ENCODE measurements at regions of chr19 and their contacts with region 1.

Region 1: GRCh38 chr19:4791170-4792018 is at the start of gene FEM1A:
- DNase-seq: peak; percentile 100
- ATAC-seq: peak; percentile 94
- H3K4me3 ChIP-seq: peak within 1 kb of the TSS; percentile 48 to 79 (median 76)
- H3K4me3 Mint-ChIP-seq: peak within 1 kb of the TSS; percentile 84
- H3K27ac ChIP-seq: peak within 1 kb of the TSS; percentile 67 to 93
- H3K27ac Mint-ChIP-seq: peak within 1 kb of the TSS; percentile 89
- H3K4me1 ChIP-seq: peaks cover 8 to 22% of the 10 kb centered on the region in 2 donors
- H3K4me1 Mint-ChIP-seq: peaks cover 30% of the 10 kb centered on the region
- H3K27me3 ChIP-seq: no peaks in the 10 kb centered on the region
- H3K27me3 Mint-ChIP-seq: no peaks in the 10 kb centered on the region
- CTCF ChIP-seq: peak; percentile 98
- total RNA-seq, gene FEM1A: 18.2 and 18.7 TPM in 2 replicates

Region 2: GRCh38 chr19:4246767-4247593 is 544.4 kb before region 1 on chr19 and contains the start of gene YJU2:
- CTCF ChIA-PET with region 1: no interaction called
- POLR2A ChIA-PET with region 1: no interaction called
- intact Hi-C with region 1: loop called (anchors 2 kb)
- DNase-seq: peak; percentile 99
- ATAC-seq: peak; percentile 94
- H3K4me3 ChIP-seq: peak within 1 kb of the TSS; percentile 86 to 99 (median 98)
- H3K4me3 Mint-ChIP-seq: peak within 1 kb of the TSS; percentile 91
- H3K27ac ChIP-seq: peak within 1 kb of the TSS; percentile 99 to 100
- H3K27ac Mint-ChIP-seq: peak within 1 kb of the TSS; percentile 95
- H3K4me1 ChIP-seq: peaks cover 12 to 24% of the 10 kb centered on the region in 2 donors
- H3K4me1 Mint-ChIP-seq: peaks cover 23% of the 10 kb centered on the region
- H3K27me3 ChIP-seq: no peaks in the 10 kb centered on the region
- H3K27me3 Mint-ChIP-seq: no peaks in the 10 kb centered on the region
- CTCF ChIP-seq: peak; percentile 40
- total RNA-seq, gene YJU2: 39.8 and 40.3 TPM in 2 replicates

Region 3: GRCh38 chr19:4583961-4584669 is 207.3 kb before region 1 on chr19:
- CTCF ChIA-PET with region 1: no interaction called
- POLR2A ChIA-PET with region 1: no interaction called
- intact Hi-C with region 1: no loop called
- DNase-seq: no peak
- ATAC-seq: no peak
- H3K4me3 ChIP-seq: no peak overlapping the region
- H3K4me3 Mint-ChIP-seq: no peak overlapping the region
- H3K27ac ChIP-seq: no peak overlapping the region
- H3K27ac Mint-ChIP-seq: no peak overlapping the region
- H3K4me1 ChIP-seq: peaks cover 15 to 18% of the 10 kb centered on the region in 2 donors
- H3K4me1 Mint-ChIP-seq: peaks cover 14% of the 10 kb centered on the region
- H3K27me3 ChIP-seq: peaks cover 0 to 67% (median 43%) of the 10 kb centered on the region in 4 experiments
- H3K27me3 Mint-ChIP-seq: peaks cover 40% of the 10 kb centered on the region
- CTCF ChIP-seq: no peak

Region 4: GRCh38 chr19:4669723-4670480 is 121.5 kb before region 1 on chr19 and contains the start of gene MYDGF:
- CTCF ChIA-PET with region 1: interaction called, 4 read pairs
- POLR2A ChIA-PET with region 1: interaction called, 6 read pairs
- intact Hi-C with region 1: loop called (anchors 1 kb)
- DNase-seq: peak; percentile 93
- ATAC-seq: peak; percentile 98
- H3K4me3 ChIP-seq: peak within 1 kb of the TSS; percentile 33 to 84 (median 79)
- H3K4me3 Mint-ChIP-seq: peak within 1 kb of the TSS; percentile 88
- H3K27ac ChIP-seq: peak within 1 kb of the TSS; percentile 6 to 87
- H3K27ac Mint-ChIP-seq: peak within 1 kb of the TSS; percentile 78
- H3K4me1 ChIP-seq: peaks cover 10 to 18% of the 10 kb centered on the region in 2 donors
- H3K4me1 Mint-ChIP-seq: peaks cover 20% of the 10 kb centered on the region
- H3K27me3 ChIP-seq: no peaks in the 10 kb centered on the region
- H3K27me3 Mint-ChIP-seq: no peaks in the 10 kb centered on the region
- CTCF ChIP-seq: no peak
- total RNA-seq, gene MYDGF: 18.1 and 21.2 TPM in 2 replicates

Region 5: DNA sequence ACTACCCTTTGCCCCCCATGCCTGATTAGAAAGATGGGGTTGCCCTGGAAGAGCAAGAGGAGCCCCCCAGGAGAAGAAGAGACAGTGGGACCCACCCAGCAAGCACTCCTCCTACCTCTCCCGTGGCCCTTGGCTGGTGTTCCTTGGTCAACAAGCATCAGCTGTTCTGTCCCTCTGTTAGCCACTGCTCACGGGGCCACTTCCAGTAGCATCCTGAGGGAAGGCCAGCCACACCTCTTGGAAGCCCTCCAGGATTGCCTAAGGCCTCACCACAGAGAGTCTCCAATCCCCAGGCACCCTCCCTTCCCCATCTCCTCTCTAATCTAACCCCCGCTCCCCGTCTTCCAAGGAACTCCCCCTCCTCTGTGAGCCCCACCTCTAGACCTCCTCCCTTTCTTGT is 52.7 kb before region 1 on chr19:
- CTCF ChIA-PET with region 1: interaction called, 102 read pairs
- POLR2A ChIA-PET with region 1: no interaction called
- intact Hi-C with region 1: no loop called
- DNase-seq: no peak
- ATAC-seq: no peak
- H3K4me3 ChIP-seq: no peak overlapping the region
- H3K4me3 Mint-ChIP-seq: no peak overlapping the region
- H3K27ac ChIP-seq: no peak overlapping the region
- H3K27ac Mint-ChIP-seq: no peak overlapping the region
- H3K4me1 ChIP-seq: no peaks in the 10 kb centered on the region
- H3K4me1 Mint-ChIP-seq: no peaks in the 10 kb centered on the region
- H3K27me3 ChIP-seq: peaks cover 0 to 19% (median 6%) of the 10 kb centered on the region in 4 experiments
- H3K27me3 Mint-ChIP-seq: peaks cover 16% of the 10 kb centered on the region
- CTCF ChIP-seq: no peak

Region 6: DNA sequence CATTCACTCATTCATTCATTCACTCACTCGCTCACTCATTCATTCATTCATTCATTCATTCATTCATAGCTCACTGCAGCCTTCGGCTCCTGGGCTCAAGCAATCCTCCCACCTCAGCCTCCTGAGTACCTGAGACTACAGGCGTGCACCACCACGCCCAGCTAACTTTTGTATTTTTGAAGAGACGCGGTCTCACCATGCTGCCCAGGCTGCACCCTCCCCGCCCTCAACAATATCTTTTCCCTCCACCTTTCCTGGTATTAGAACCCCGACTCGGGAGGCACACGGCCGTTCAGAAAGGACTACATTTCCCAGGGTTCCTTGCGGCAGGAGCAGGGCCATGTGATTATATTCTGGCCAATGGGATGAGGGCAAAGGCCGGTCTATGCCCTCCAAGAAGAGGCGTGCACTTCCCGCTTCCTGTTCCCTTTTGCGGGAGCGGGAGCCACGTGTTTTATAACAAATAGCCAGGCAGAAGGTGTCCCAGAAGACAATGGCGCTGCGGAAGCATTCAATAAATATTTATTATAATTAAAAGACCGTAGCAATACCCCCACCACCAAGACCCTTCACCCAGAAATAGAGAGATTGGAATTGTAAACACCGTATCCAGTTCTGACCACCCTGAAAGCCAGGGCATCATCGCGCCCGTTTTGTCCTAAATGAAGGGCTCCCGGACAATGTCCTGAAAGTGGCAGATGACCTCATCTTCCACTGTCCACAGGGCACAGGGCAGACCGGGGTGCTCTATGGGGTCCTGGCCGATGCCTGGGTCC is 24.2 kb after region 1 on chr19:
- CTCF ChIA-PET with region 1: interaction called, 6 read pairs
- POLR2A ChIA-PET with region 1: interaction called, 6 read pairs
- intact Hi-C with region 1: loop called (anchors 1 kb)
- DNase-seq: peak; percentile 85
- ATAC-seq: peak; percentile 77
- H3K4me3 ChIP-seq: peak overlapping the region in 4 of 5 experiments; percentile 19 to 57 (median 37)
- H3K4me3 Mint-ChIP-seq: peak overlapping the region; percentile 74
- H3K27ac ChIP-seq: peak overlapping the region; percentile 3 to 12
- H3K27ac Mint-ChIP-seq: peak overlapping the region; percentile 60
- H3K4me1 ChIP-seq: peaks cover 10 to 20% of the 10 kb centered on the region in 2 donors
- H3K4me1 Mint-ChIP-seq: peaks cover 25% of the 10 kb centered on the region
- H3K27me3 ChIP-seq: no peaks in the 10 kb centered on the region
- H3K27me3 Mint-ChIP-seq: no peaks in the 10 kb centered on the region
- CTCF ChIP-seq: no peak

Measured in B cell (primary cell).